CD4-positive, alpha-beta memory T cell (primary cell): ENCODE measurements at regions of chr19 and their contacts with region 1.

Region 1: DNA sequence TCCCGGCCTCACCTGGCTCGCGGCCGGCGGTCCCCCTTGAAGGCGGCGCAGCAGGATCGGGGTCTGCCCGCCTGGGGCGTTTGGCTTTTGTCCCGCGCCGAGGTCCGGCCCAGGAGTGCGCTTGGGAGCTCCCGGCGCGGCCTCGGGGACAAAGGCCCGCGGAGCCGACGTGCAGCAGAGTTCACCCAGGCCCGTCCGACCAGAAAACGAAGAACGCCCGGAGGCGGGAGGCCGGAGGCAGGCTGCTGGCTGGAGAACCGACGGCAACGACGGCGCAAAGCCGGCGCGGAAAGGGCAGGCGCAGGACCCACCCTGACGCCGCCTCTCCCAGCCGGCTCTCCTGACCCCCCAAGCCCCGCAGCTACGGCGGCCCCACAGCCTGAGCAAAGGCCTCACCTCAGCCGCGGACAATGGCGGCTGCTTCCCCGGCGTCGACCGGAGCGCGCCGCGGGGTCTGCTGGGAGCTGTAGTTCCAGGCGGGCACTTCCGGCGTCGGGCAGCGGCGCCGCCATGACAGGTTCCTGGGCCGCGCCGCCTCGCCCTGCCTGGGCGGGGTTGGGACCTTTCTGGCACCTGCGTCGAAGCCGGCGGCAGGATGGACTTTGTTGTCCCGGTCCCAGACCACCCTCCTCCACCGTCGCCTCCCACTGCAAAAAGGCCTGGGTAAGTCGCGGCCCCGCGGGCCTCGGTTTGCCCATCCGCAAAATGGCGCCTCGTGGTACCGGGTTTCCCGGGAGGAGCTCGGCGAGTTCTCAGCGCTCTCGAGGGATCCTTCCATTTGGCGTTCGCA is at the start of gene ZNF606:
- DNase-seq: peak; percentile 83 to 89 (median 86)
- H3K4me3 ChIP-seq: peak within 1 kb of the TSS; percentile 93 to 98
- H3K4me3 Mint-ChIP-seq: peak within 1 kb of the TSS; percentile 76 to 87 (median 84)
- H3K27ac ChIP-seq: peak within 1 kb of the TSS; percentile 80
- H3K27ac Mint-ChIP-seq: peak within 1 kb of the TSS; percentile 78 to 93 (median 87)
- H3K4me1 ChIP-seq: peaks cover 22% of the 10 kb centered on the region
- H3K4me1 Mint-ChIP-seq: peaks cover 15 to 34% (median 26%) of the 10 kb centered on the region in 4 donors
- H3K27me3 ChIP-seq: no peaks in the 10 kb centered on the region
- H3K27me3 Mint-ChIP-seq: no peaks in the 10 kb centered on the region
- total RNA-seq, gene ZNF606: 25.5 to 37.3 TPM

Region 2: GRCh38 chr19:57362997-57363705 is 639.4 kb before region 1 on chr19 and contains the starts of genes TRAPPC2B and ZNF547:
- CTCF ChIA-PET with region 1: no interaction called
- POLR2A ChIA-PET with region 1: no interaction called
- intact Hi-C with region 1: loop called (anchors 2 kb)
- DNase-seq: peak; percentile 97 to 99 (median 99)
- H3K4me3 ChIP-seq: peak within 1 kb of the TSS; percentile 51 to 70
- H3K4me3 Mint-ChIP-seq: peak within 1 kb of the TSS; percentile 92 to 97 (median 94)
- H3K27ac ChIP-seq: peak within 1 kb of the TSS; percentile 76
- H3K27ac Mint-ChIP-seq: peak within 1 kb of the TSS; percentile 97 to 99 (median 99)
- H3K4me1 ChIP-seq: peaks cover 12% of the 10 kb centered on the region
- H3K4me1 Mint-ChIP-seq: peaks cover 12 to 18% (median 16%) of the 10 kb centered on the region in 4 donors
- H3K27me3 ChIP-seq: no peaks in the 10 kb centered on the region
- H3K27me3 Mint-ChIP-seq: peaks cover 0 to 2% of the 10 kb centered on the region in 2 donors
- total RNA-seq, gene TRAPPC2B: 11.0 to 12.1 TPM
- total RNA-seq, gene ZNF547: 6.5 to 10.8 TPM

Region 3: GRCh38 chr19:57583521-57584416 is 418.8 kb before region 1 on chr19 and contains the start of gene ZIK1:
- CTCF ChIA-PET with region 1: no interaction called
- POLR2A ChIA-PET with region 1: interaction called, 12 read pairs
- intact Hi-C with region 1: loop called (anchors 2 kb)
- DNase-seq: peak; percentile 84 to 90 (median 89)
- H3K4me3 ChIP-seq: peak within 1 kb of the TSS; percentile 43 to 74
- H3K4me3 Mint-ChIP-seq: peak within 1 kb of the TSS; percentile 92 to 99 (median 96)
- H3K27ac ChIP-seq: no peak within 1 kb of the TSS
- H3K27ac Mint-ChIP-seq: peak within 1 kb of the TSS; percentile 65 to 94 (median 86)
- H3K4me1 ChIP-seq: peaks cover 21% of the 10 kb centered on the region
- H3K4me1 Mint-ChIP-seq: peaks cover 10 to 29% (median 19%) of the 10 kb centered on the region in 4 donors
- H3K27me3 ChIP-seq: no peaks in the 10 kb centered on the region
- H3K27me3 Mint-ChIP-seq: no peaks in the 10 kb centered on the region
- total RNA-seq, gene ZIK1: 11.1 to 11.3 TPM

Region 4: DNA sequence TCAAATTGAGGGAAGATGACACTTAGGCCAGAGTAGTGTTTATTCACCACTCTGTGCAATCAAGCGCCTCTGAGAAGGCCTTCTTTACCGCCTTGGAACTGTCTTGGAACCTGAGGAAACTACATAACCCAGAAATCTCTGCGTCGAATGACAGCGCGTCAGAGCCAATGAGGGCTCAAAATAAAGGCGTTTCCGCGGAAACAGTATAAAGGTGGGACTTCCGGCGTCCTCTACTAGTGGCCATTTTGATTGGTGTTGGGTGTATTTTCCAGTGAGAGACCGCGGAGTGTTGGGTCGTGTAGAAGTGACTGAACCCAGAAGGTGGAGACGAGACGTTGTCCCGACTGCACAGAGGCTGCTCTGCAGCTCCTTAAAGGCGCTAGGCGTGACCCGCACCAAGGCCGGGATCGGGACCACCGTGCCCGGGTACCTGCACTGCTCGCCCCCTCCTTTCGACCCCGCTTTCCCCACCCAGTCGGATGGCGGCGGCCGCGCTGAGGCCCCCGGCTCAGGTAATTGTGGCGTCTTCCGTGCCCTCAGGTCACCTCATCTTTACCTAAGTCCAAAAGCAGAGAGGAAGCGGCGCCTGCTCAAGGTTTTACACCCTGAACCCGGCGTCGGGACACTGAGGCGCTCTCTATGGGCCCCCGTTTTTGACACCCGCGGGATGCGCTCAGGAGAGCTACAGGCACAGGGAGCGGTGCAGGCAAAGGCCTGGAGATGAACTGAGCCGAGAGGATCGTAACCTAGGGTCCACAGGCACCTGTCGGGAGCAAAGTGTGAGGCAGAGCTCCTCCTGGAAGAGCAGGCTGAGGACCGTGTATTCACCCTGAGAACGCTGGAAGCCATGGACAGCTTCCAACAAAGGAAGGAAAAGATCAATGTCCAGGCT is 255.8 kb before region 1 on chr19 and contains the start of gene ZNF776:
- CTCF ChIA-PET with region 1: no interaction called
- POLR2A ChIA-PET with region 1: interaction called, 3 read pairs
- intact Hi-C with region 1: loop called (anchors 5 kb)
- DNase-seq: peak; percentile 84 to 90 (median 87)
- H3K4me3 ChIP-seq: peak within 1 kb of the TSS; percentile 78 to 87
- H3K4me3 Mint-ChIP-seq: peak within 1 kb of the TSS; percentile 87 to 99 (median 94)
- H3K27ac ChIP-seq: peak within 1 kb of the TSS; percentile 77
- H3K27ac Mint-ChIP-seq: peak within 1 kb of the TSS; percentile 76 to 98 (median 94)
- H3K4me1 ChIP-seq: peaks cover 18% of the 10 kb centered on the region
- H3K4me1 Mint-ChIP-seq: peaks cover 13 to 37% (median 27%) of the 10 kb centered on the region in 4 donors
- H3K27me3 ChIP-seq: no peaks in the 10 kb centered on the region
- H3K27me3 Mint-ChIP-seq: no peaks in the 10 kb centered on the region
- total RNA-seq, gene ZNF776: 38.9 to 40.9 TPM

Region 5: DNA sequence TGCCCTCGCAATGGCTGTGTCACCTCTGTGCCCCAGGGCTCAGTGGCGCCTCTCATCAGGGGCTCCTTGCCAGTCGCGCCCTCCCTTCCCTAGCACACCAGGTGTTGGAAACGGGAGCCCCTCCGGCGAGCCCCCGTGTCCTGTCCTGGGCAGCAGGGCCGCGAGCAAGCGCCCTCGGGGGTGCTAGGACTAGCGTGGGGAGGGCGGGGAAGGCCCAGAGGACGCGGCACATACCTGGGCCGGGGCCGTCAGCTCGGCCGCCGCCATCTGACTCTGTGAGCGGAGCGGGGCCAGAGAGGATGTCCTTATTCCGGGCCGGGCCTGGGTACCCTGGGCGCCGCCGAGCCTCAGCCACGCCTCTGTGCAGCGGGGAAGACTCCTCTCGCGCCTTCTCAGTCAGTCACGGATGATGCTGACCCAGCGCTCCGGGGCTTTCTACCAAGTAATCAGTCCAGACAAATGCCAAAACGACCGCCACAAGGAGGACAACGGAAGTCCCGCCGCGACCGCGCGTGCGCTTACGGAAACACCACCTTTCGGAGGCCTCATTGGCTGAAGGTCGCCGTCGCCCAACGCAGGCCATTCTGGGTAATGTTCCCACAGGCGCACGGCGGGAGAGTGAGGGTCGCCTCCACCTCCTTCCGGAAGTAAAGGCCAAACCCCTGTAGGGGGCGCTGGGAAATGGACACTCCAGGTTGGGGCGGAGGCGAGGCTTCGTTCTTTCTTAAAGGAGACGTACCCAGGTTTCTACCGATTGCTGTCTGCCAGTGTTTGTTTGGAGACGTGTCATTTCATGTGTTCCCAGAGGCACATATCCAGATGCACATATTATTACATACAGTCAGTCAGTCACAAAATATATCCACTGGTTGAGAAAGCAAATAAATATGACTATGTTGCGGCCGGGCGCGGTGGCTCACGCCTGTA is 55.1 kb before region 1 on chr19 and contains the start of gene ZNF256:
- CTCF ChIA-PET with region 1: no interaction called
- POLR2A ChIA-PET with region 1: interaction called, 12 read pairs
- intact Hi-C with region 1: loop called (anchors 1 kb)
- DNase-seq: peak; percentile 79 to 85 (median 82)
- H3K4me3 ChIP-seq: peak within 1 kb of the TSS; percentile 69 to 89
- H3K4me3 Mint-ChIP-seq: peak within 1 kb of the TSS; percentile 90 to 98 (median 95)
- H3K27ac ChIP-seq: peak within 1 kb of the TSS; percentile 66
- H3K27ac Mint-ChIP-seq: peak within 1 kb of the TSS; percentile 78 to 98 (median 92)
- H3K4me1 ChIP-seq: peaks cover 18% of the 10 kb centered on the region
- H3K4me1 Mint-ChIP-seq: peaks cover 15 to 24% (median 20%) of the 10 kb centered on the region in 4 donors
- H3K27me3 ChIP-seq: no peaks in the 10 kb centered on the region
- H3K27me3 Mint-ChIP-seq: no peaks in the 10 kb centered on the region
- total RNA-seq, gene ZNF256: 12.4 to 13.9 TPM

Region 6: GRCh38 chr19:58020129-58020528 is 17.6 kb after region 1 on chr19:
- CTCF ChIA-PET with region 1: no interaction called
- POLR2A ChIA-PET with region 1: no interaction called
- intact Hi-C with region 1: no loop called
- DNase-seq: no peak
- H3K4me3 ChIP-seq: no peak overlapping the region
- H3K4me3 Mint-ChIP-seq: no peak overlapping the region
- H3K27ac ChIP-seq: no peak overlapping the region
- H3K27ac Mint-ChIP-seq: no peak overlapping the region
- H3K4me1 ChIP-seq: no peaks in the 10 kb centered on the region
- H3K4me1 Mint-ChIP-seq: no peaks in the 10 kb centered on the region
- H3K27me3 ChIP-seq: no peaks in the 10 kb centered on the region
- H3K27me3 Mint-ChIP-seq: peaks cover 3 to 4% of the 10 kb centered on the region in 2 donors